Esophagus squamous epithelium (tissue), 5 donors: ENCODE measurements at regions of chr9 and their contacts with region 1.

Region 1: DNA sequence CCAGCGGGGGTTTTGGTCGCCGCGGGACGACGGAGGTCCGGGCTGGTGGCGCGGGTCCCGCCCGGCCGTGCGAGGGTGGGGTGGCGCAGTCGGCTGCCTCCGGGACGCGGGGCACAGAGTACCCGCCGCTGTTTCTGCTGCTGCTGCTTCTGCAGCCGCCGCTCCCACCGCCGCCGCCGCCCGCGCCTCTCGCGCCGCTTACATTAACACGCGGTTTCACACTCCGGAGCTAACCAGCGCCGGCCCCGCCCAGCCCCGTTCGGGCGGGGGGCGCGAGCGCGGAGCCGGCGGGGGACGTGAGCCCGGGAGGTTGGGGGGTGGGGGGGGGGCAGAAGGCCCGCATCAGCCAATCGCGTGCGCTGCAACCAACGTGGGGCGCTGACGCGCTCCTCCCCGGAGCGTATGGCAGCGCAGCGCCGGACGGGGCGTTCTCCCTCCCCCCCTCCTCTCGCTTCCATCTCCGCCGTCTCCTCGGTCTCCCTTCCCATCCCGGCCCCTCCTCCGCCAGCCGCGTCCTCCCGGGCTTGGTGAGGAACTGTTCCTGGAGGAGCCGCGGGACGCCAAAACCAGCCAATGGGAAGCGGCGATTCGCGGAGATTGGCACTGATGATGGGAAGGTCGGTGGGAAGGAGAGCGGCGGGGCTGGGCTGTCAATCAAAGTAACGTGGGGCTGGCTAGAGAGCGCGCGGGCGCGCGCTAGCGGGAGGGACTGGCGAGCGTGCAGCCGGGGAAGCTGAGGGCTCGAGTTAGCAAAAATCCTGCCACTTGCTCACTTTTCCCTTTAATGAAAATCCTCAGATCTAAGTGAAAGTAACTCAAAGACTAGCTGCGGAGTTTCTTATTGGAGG is at the start of gene TLE1:
- DNase-seq: peak; percentile 86
- H3K4me3 ChIP-seq: peak within 1 kb of the TSS; percentile 79 to 91 (median 84)
- H3K27ac ChIP-seq: peak within 1 kb of the TSS; percentile 92 to 96 (median 94)
- H3K4me1 ChIP-seq: peaks cover 8 to 42% (median 12%) of the 10 kb centered on the region in 3 donors
- H3K27me3 ChIP-seq: peaks cover 0 to 16% (median 0%) of the 10 kb centered on the region in 4 donors
- CTCF ChIP-seq: no peak
- POLR2A ChIP-seq: peak in 3 of 4 donors; percentile 52 to 96 (median 93)
- total RNA-seq, gene TLE1: 17.1 to 43.3 (median 20.4) TPM

Region 2: GRCh38 chr9:81848472-81848871 is 158.9 kb after region 1 on chr9:
- intact Hi-C with region 1: loop called (anchors 10 kb)
- DNase-seq: no peak
- H3K4me3 ChIP-seq: no peak overlapping the region
- H3K27ac ChIP-seq: no peak overlapping the region
- H3K4me1 ChIP-seq: peaks cover 0 to 7% (median 0%) of the 10 kb centered on the region in 3 donors
- H3K27me3 ChIP-seq: no peaks in the 10 kb centered on the region
- CTCF ChIP-seq: peak in 3 of 6 experiments; percentile 19 to 48 (median 38)
- POLR2A ChIP-seq: no peak